A549 (cell line): ENCODE measurements at regions of chr14 and their contacts with region 1.

Region 1: GRCh38 chr14:23478111-23478759 is 8.7 kb downstream of the NGDN start:
- DNase-seq: peak; percentile 54 to 71
- ATAC-seq: peak; percentile 70 to 72; a peak in 4 of 6 replicates
- H3K4me3 ChIP-seq: no peak overlapping the region
- H3K27ac ChIP-seq: no peak overlapping the region
- H3K4me1 ChIP-seq: no peaks in the 10 kb centered on the region
- CTCF ChIP-seq: peak; percentile 77
- EP300 ChIP-seq: no peak
- POLR2A ChIP-seq: no peak
- RAD21 ChIP-seq: peak; percentile 74 to 75

Region 2: GRCh38 chr14:23528555-23528954 is 50.3 kb after region 1 on chr14:
- CTCF ChIA-PET with region 1: interaction called, 31 read pairs
- POLR2A ChIA-PET with region 1: no interaction called
- DNase-seq: no peak
- ATAC-seq: peak; percentile 63 to 71; a peak in 5 of 6 replicates
- H3K4me3 ChIP-seq: no peak overlapping the region
- H3K27ac ChIP-seq: no peak overlapping the region
- H3K4me1 ChIP-seq: no peaks in the 10 kb centered on the region
- CTCF ChIP-seq: no peak
- EP300 ChIP-seq: no peak
- POLR2A ChIP-seq: no peak
- RAD21 ChIP-seq: no peak

Region 3: GRCh38 chr14:23539248-23540140 is 61.3 kb after region 1 on chr14:
- CTCF ChIA-PET with region 1: interaction called, 74 read pairs
- POLR2A ChIA-PET with region 1: interaction called, 5 read pairs
- DNase-seq: peak; percentile 45 to 61
- ATAC-seq: peak; percentile 79 to 91; a peak in 5 of 6 replicates
- H3K4me3 ChIP-seq: no peak overlapping the region
- H3K27ac ChIP-seq: no peak overlapping the region
- H3K4me1 ChIP-seq: no peaks in the 10 kb centered on the region
- CTCF ChIP-seq: peak; percentile 59
- EP300 ChIP-seq: no peak
- POLR2A ChIP-seq: no peak
- RAD21 ChIP-seq: peak; percentile 37 to 51; a peak in 2 of 5 replicates

Region 4: DNA sequence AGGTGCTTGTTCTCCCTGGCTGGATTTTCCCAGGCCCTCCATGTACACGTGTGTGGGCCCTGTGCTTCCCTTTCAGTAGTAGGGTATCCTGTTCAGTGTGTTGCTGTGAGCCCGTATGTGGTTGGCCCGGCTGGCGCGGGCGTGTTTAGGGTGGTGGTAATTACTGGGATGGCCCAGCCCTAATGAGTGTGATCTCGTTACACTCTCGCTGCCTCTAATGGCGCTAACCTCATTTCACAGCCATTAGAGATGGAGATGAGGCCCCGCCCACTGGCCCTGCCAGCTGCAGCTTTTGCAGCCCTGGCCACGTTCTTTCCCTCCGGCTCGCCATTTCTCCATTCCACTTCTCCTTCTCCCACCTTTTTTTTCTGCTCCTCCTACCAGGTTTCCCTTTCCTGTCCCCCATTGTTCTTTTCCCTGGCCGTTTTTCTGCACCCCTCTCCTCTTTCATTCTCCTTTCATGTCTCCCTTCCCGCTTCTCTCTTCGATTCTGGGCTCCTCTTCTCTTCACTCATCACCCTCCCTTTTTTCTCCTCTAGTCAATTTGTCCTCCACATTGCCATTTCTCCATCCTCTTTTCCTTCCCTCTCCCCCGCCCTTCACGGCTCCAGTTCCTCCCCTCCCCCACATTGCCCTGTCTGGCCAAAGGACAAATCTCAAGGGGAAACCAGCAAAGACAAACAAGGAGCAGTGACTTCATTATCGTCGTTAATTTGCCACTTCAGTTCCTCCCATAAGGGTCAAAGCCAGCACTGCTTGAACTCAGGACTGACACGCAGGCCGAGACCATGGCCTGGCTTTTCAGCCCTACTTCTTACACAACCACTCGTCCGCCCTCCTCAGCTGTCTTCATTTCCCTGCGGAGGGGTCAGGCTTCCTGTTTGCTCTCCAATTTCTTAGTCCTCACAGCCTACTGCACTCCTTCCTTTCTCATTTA is 66.5 kb after region 1 on chr14:
- CTCF ChIA-PET with region 1: interaction called, 74 read pairs
- POLR2A ChIA-PET with region 1: interaction called, 5 read pairs
- DNase-seq: no peak
- ATAC-seq: no peak
- H3K4me3 ChIP-seq: no peak overlapping the region
- H3K27ac ChIP-seq: no peak overlapping the region
- H3K4me1 ChIP-seq: no peaks in the 10 kb centered on the region
- CTCF ChIP-seq: no peak
- EP300 ChIP-seq: no peak
- POLR2A ChIP-seq: no peak
- RAD21 ChIP-seq: no peak